ENCODE measurements at regions of chr9 and their contacts with region 1.

Region 1: GRCh38 chr9:76658535-76659231 is 105.6 kb upstream of the PCA3 start:
- DNase-seq: peak; percentile 66
- CTCF ChIP-seq: peak; percentile 63

Region 2: DNA sequence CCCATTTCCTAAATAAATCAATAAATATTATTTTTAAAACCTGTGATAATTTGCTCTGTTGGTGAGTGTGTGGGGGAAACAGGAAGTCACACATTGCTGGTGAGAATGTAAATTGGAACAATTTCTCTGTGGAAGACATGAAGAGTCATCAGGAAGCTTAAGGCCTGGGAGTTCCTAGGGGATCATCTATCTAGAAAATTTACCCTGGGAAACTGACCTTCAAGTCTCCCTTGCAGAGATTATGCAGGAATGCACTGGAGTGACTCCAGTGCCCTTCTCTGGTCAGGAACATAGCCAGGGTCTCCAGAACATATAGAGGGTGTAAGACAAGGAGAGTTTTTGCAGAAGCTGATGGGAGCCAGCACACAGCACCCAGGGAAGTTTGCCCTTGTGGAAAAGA is 212.7 kb before region 1 on chr9:
- in situ Hi-C with region 1: loop called (anchors 5 kb)
- DNase-seq: no peak
- CTCF ChIP-seq: no peak

Region 3: DNA sequence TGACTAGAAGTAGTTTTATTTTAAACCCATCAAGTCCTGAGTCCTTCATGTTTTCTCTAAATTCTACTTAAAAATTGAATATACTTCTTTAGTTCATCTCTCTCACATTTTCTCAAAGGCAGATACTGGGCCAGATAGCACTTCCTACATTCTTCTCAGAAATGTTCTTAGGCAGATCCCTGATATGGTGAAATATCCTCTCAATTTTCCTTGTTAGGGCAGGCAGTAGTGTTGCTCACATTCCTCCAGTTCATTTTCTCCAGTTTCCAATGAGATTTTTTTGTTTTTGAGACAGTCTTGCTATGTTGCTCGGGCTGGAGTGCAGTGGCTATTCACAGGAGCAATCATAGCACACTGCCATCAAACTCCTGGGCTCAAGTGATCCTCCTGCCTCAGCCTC is 194.0 kb before region 1 on chr9:
- in situ Hi-C with region 1: no loop called
- DNase-seq: no peak
- CTCF ChIP-seq: no peak

Region 4: DNA sequence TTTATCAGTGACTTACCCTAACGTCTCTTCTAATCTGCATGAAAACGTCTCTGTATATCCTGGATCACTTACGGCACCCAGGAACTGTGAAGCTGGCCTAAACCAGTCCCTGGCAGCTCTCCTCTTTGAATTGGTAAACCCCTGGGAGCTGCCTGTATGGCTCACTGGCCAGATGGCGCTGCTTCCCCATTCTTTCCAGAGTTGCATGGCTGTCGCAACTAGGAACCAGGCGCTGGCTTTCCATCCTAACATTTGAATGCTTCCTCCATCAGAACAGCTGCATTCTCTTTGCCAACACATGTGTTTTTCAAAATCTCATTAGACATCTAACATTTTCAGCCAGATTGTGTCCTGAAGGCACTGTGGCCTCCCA is 97.6 kb after region 1 on chr9:
- in situ Hi-C with region 1: no loop called
- DNase-seq: no peak
- CTCF ChIP-seq: peak; percentile 11